ENCODE measurements at regions of chr9 and their contacts with region 1.

Region 1: DNA sequence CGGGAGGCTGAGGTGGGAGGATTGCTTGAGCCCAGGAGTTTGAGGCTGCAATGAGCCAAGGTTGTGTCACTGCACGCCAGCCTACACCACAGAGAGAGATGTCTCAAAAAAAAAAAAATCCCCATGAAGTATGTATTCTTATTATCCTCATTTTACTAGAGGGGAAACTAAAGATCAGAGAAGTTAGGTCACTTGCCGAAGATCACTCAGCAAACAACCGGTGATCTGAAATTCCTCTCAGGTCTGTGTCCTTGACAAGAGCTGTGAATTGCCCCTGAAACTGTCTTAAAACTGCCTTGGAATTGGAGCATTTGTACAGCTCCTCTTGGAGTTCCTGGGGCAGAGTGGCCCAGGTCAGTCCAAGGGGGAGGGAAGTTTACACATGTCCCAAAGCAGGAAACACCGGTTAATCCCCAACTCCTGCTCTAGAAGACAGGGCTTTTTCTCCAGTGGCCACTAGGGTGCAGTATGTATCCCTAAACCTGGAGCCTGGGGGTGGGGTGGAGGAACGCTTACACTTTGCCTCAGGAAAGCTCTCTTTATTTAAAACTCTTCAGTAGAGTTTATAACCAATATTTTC is 27.6 kb downstream of the AQP7 start:
- DNase-seq: peak; percentile 22 to 79 (median 70)
- ATAC-seq: peak; percentile 95
- H3K4me3 ChIP-seq: no peak overlapping the region
- H3K4me3 Mint-ChIP-seq: peak overlapping the region; percentile 54
- H3K27ac ChIP-seq: no peak overlapping the region
- H3K27ac Mint-ChIP-seq: no peak overlapping the region
- H3K4me1 ChIP-seq: no peaks in the 10 kb centered on the region
- H3K4me1 Mint-ChIP-seq: peaks cover 9% of the 10 kb centered on the region
- H3K27me3 ChIP-seq: no peaks in the 10 kb centered on the region
- H3K27me3 Mint-ChIP-seq: no peaks in the 10 kb centered on the region
- CTCF ChIP-seq: peak; percentile 84

Region 2: GRCh38 chr9:32142074-32142473 is 1232.7 kb before region 1 on chr9:
- CTCF ChIA-PET with region 1: no interaction called
- POLR2A ChIA-PET with region 1: no interaction called
- intact Hi-C with region 1: no loop called
- DNase-seq: no peak
- ATAC-seq: no peak
- H3K4me3 ChIP-seq: no peak overlapping the region
- H3K4me3 Mint-ChIP-seq: no peak overlapping the region
- H3K27ac ChIP-seq: no peak overlapping the region
- H3K27ac Mint-ChIP-seq: no peak overlapping the region
- H3K4me1 ChIP-seq: no peaks in the 10 kb centered on the region
- H3K4me1 Mint-ChIP-seq: no peaks in the 10 kb centered on the region
- H3K27me3 ChIP-seq: no peaks in the 10 kb centered on the region
- H3K27me3 Mint-ChIP-seq: peaks cover 2% of the 10 kb centered on the region
- CTCF ChIP-seq: no peak

Region 3: DNA sequence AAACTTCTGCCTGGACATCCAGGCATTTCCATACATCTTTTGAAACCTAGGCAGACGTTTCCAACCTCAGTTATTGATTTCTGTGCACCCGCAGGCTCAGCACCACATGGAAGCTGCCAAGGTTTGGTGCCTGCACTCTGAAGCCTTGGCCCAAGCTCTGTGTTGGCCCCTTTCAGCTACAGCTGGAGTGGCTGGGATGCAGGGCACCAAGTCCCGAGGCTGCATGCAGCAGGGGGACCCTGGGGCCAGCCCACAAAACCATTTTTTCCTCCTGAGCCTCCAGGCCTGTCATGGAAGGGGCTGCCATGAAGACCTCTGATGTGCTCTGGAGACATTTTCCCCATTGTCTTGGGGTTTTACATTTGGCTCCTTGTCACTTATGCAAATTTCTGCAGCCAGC is 34.5 kb before region 1 on chr9:
- CTCF ChIA-PET with region 1: no interaction called
- POLR2A ChIA-PET with region 1: no interaction called
- intact Hi-C with region 1: no loop called
- DNase-seq: no peak
- ATAC-seq: no peak
- H3K4me3 ChIP-seq: no peak overlapping the region
- H3K4me3 Mint-ChIP-seq: no peak overlapping the region
- H3K27ac ChIP-seq: no peak overlapping the region
- H3K27ac Mint-ChIP-seq: no peak overlapping the region
- H3K4me1 ChIP-seq: no peaks in the 10 kb centered on the region
- H3K4me1 Mint-ChIP-seq: peaks cover 5% of the 10 kb centered on the region
- H3K27me3 ChIP-seq: no peaks in the 10 kb centered on the region
- H3K27me3 Mint-ChIP-seq: no peaks in the 10 kb centered on the region
- CTCF ChIP-seq: no peak

Region 4: GRCh38 chr9:33354651-33355211 is 20.0 kb before region 1 on chr9:
- CTCF ChIA-PET with region 1: interaction called, 12 read pairs
- POLR2A ChIA-PET with region 1: no interaction called
- intact Hi-C with region 1: no loop called
- DNase-seq: no peak
- ATAC-seq: no peak
- H3K4me3 ChIP-seq: no peak overlapping the region
- H3K4me3 Mint-ChIP-seq: no peak overlapping the region
- H3K27ac ChIP-seq: no peak overlapping the region
- H3K27ac Mint-ChIP-seq: peak overlapping the region; percentile 64
- H3K4me1 ChIP-seq: no peaks in the 10 kb centered on the region
- H3K4me1 Mint-ChIP-seq: no peaks in the 10 kb centered on the region
- H3K27me3 ChIP-seq: no peaks in the 10 kb centered on the region
- H3K27me3 Mint-ChIP-seq: no peaks in the 10 kb centered on the region
- CTCF ChIP-seq: no peak

Region 5: GRCh38 chr9:33415501-33416038 is 40.8 kb after region 1 on chr9:
- CTCF ChIA-PET with region 1: interaction called, 25 read pairs
- POLR2A ChIA-PET with region 1: interaction called, 5 read pairs
- intact Hi-C with region 1: loop called (anchors 1 kb)
- DNase-seq: peak; percentile 83 to 97 (median 93)
- ATAC-seq: peak; percentile 88
- H3K4me3 ChIP-seq: peak overlapping the region in 1 of 2 experiments; percentile 7
- H3K4me3 Mint-ChIP-seq: peak overlapping the region; percentile 72
- H3K27ac ChIP-seq: peak overlapping the region; percentile 34 to 41
- H3K27ac Mint-ChIP-seq: peak overlapping the region; percentile 95
- H3K4me1 ChIP-seq: peaks cover 42% of the 10 kb centered on the region
- H3K4me1 Mint-ChIP-seq: peaks cover 50% of the 10 kb centered on the region
- H3K27me3 ChIP-seq: no peaks in the 10 kb centered on the region
- H3K27me3 Mint-ChIP-seq: no peaks in the 10 kb centered on the region
- CTCF ChIP-seq: peak; percentile 63

Region 6: GRCh38 chr9:33452828-33453271 is 78.1 kb after region 1 on chr9:
- CTCF ChIA-PET with region 1: interaction called, 24 read pairs
- POLR2A ChIA-PET with region 1: no interaction called
- intact Hi-C with region 1: no loop called
- DNase-seq: peak in 8 of 9 experiments; percentile 32 to 67 (median 61)
- ATAC-seq: peak; percentile 70
- H3K4me3 ChIP-seq: no peak overlapping the region
- H3K4me3 Mint-ChIP-seq: no peak overlapping the region
- H3K27ac ChIP-seq: peak overlapping the region in 1 of 2 experiments; percentile 4
- H3K27ac Mint-ChIP-seq: peak overlapping the region; percentile 87
- H3K4me1 ChIP-seq: peaks cover 62% of the 10 kb centered on the region
- H3K4me1 Mint-ChIP-seq: peaks cover 62% of the 10 kb centered on the region
- H3K27me3 ChIP-seq: no peaks in the 10 kb centered on the region
- H3K27me3 Mint-ChIP-seq: no peaks in the 10 kb centered on the region
- CTCF ChIP-seq: peak; percentile 56

Region 7: DNA sequence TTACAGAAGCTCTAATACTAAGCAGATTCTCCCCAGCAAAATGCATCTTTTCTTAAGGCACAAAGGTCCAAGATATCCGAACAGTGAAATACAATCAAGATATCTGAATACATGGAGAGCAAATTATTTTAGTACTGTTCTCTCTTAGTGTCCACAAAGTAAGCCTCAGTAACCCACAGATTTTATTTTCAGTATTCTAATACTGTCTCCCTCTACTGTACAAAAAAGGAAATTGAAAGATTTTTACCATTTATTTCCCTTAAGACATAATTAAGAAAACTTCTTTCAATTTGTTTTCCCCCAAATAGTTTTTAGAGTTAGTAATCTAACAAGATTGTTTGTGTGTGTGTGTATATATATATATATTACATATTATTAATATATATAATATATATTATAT is 123.7 kb after region 1 on chr9:
- CTCF ChIA-PET with region 1: interaction called, 4 read pairs
- POLR2A ChIA-PET with region 1: no interaction called
- intact Hi-C with region 1: loop called in 1 of 2 experiments (anchors 1 kb)
- DNase-seq: peak in 1 of 9 experiments; percentile 14
- ATAC-seq: no peak
- H3K4me3 ChIP-seq: no peak overlapping the region
- H3K4me3 Mint-ChIP-seq: no peak overlapping the region
- H3K27ac ChIP-seq: no peak overlapping the region
- H3K27ac Mint-ChIP-seq: no peak overlapping the region
- H3K4me1 ChIP-seq: peaks cover 3% of the 10 kb centered on the region
- H3K4me1 Mint-ChIP-seq: no peaks in the 10 kb centered on the region
- H3K27me3 ChIP-seq: no peaks in the 10 kb centered on the region
- H3K27me3 Mint-ChIP-seq: no peaks in the 10 kb centered on the region
- CTCF ChIP-seq: peak; percentile 50

Region 8: GRCh38 chr9:33623658-33624586 is 249.2 kb after region 1 on chr9:
- CTCF ChIA-PET with region 1: interaction called, 3 read pairs
- POLR2A ChIA-PET with region 1: no interaction called
- intact Hi-C with region 1: loop called in 1 of 2 experiments (anchors 10 kb)
- DNase-seq: peak; percentile 44 to 85 (median 64)
- ATAC-seq: peak; percentile 99
- H3K4me3 ChIP-seq: no peak overlapping the region
- H3K4me3 Mint-ChIP-seq: no peak overlapping the region
- H3K27ac ChIP-seq: no peak overlapping the region
- H3K27ac Mint-ChIP-seq: no peak overlapping the region
- H3K4me1 ChIP-seq: no peaks in the 10 kb centered on the region
- H3K4me1 Mint-ChIP-seq: peaks cover 7% of the 10 kb centered on the region
- H3K27me3 ChIP-seq: no peaks in the 10 kb centered on the region
- H3K27me3 Mint-ChIP-seq: peaks cover 23% of the 10 kb centered on the region
- CTCF ChIP-seq: peak; percentile 81